Activated B cell treated with CpG ODN at 0.5 μM for 24 hours (primary cell): ENCODE measurements at regions of chr3 and their contacts with region 1.

Region 1: DNA sequence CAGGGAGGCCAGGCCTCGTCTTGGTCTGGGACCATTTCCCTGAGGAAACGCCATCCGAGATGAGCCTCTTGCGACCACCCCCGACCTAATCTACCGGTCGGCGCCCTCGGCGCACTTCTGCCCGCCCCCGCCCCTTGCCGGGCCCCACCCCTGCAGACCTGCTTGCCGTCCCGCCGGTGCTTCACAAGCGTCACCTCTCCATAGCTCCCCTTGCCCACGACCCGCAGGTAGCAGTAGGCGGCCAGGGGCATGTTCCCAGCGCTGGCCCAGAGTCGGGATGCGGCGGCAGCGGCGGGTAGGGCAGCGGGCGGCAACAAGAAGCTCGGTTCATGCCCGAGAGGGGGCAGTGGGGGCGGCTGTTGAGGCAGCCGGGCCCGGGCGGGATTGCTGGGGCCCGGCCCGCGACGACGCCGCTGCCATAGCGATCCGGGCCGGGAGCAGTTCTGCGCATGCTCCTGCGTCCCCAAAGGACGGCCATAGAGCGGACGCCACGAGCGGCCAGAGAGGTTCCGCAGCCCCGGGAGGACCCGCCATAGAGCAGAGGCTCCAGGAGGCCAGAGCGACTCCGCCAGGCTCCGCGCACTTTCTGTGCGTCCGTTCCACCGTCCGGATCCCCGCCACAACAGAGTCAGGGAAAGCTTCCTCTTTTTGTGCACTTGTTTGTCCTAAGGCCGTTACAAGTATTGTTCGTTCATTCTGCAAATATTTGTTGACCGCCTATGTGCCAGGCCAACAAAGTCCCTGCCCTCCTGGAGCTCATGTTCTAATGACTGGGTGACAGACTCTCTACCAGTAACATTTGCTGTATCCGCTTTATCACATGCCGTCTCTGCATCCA is at the start of gene NEK4:
- DNase-seq: peak; percentile 80
- ATAC-seq: peak; percentile 95
- H3K4me3 Mint-ChIP-seq: peak within 1 kb of the TSS; percentile 94
- H3K27ac Mint-ChIP-seq: peak within 1 kb of the TSS; percentile 95
- H3K4me1 Mint-ChIP-seq: peaks cover 17% of the 10 kb centered on the region
- H3K27me3 Mint-ChIP-seq: no peaks in the 10 kb centered on the region
- CTCF ChIP-seq: no peak
- total RNA-seq, gene NEK4: 23.0 and 24.5 TPM in 2 replicates

Region 2: GRCh38 chr3:52685709-52686691 is 84.7 kb before region 1 on chr3 and contains the starts of genes GNL3 and PBRM1:
- CTCF ChIA-PET with region 1: no interaction called
- POLR2A ChIA-PET with region 1: interaction called, 5 read pairs
- intact Hi-C with region 1: loop called (anchors 1 kb)
- DNase-seq: peak; percentile 92
- ATAC-seq: peak; percentile 89
- H3K4me3 Mint-ChIP-seq: peak within 1 kb of the TSS; percentile 96
- H3K27ac Mint-ChIP-seq: peak within 1 kb of the TSS; percentile 95
- H3K4me1 Mint-ChIP-seq: peaks cover 53% of the 10 kb centered on the region
- H3K27me3 Mint-ChIP-seq: no peaks in the 10 kb centered on the region
- CTCF ChIP-seq: no peak
- total RNA-seq, gene GNL3: 137 and 145 TPM in 2 replicates
- total RNA-seq, gene PBRM1: 60.0 and 62.1 TPM in 2 replicates

Region 3: DNA sequence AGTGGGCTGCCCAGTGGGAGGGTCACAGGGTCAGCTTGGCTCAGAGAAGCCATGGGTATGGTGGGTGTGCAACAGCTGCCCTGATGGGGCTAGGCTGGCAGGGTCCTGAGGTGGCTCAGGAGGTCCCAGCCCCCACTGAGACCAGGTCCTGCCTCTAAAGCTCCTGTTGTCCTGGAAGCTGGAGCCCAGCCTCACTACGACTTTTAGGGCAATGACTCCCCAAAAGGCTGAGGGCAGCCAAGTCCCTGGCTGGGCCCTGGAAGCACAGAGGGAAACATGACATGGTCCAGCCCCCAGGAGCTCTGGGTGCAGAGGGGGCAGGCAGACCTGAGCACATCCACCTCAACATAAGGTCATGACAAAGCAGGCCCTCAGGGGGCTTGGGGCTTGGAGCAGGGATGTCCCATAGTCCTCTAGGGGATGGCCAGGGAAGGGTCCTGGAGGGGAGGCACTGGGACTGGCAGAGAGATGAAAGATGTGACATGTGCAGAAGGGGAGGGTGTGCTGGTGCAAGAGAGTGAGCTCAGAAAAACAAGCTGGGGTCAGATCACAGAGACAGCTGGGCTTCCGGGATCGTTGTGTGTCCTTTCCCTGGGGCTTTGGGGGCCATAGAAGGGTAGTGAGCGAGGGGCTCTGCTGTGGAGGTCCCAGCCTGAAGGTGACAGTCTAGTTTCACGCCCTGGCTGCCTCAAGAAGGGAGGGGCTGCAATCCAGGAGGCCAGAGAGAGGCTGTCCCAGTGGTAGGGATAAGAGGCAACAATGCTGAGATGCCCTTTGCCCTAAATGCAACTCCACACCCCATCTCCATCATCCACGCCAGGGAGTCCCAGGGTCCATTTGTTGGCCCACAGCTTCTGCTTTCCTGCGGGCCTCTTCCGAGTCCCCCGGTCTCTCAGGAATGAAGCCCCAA is 23.2 kb after region 1 on chr3:
- CTCF ChIA-PET with region 1: interaction called, 4 read pairs
- POLR2A ChIA-PET with region 1: interaction called, 10 read pairs
- intact Hi-C with region 1: loop called (anchors 1 kb)
- DNase-seq: no peak
- ATAC-seq: no peak
- H3K4me3 Mint-ChIP-seq: no peak overlapping the region
- H3K27ac Mint-ChIP-seq: no peak overlapping the region
- H3K4me1 Mint-ChIP-seq: no peaks in the 10 kb centered on the region
- H3K27me3 Mint-ChIP-seq: no peaks in the 10 kb centered on the region
- CTCF ChIP-seq: no peak

Region 4: GRCh38 chr3:52820736-52821135 is 50.0 kb after region 1 on chr3:
- CTCF ChIA-PET with region 1: no interaction called
- POLR2A ChIA-PET with region 1: no interaction called
- intact Hi-C with region 1: loop called (anchors 5 kb)
- DNase-seq: no peak
- ATAC-seq: no peak
- H3K4me3 Mint-ChIP-seq: no peak overlapping the region
- H3K27ac Mint-ChIP-seq: no peak overlapping the region
- H3K4me1 Mint-ChIP-seq: no peaks in the 10 kb centered on the region
- H3K27me3 Mint-ChIP-seq: no peaks in the 10 kb centered on the region
- CTCF ChIP-seq: no peak

Region 5: DNA sequence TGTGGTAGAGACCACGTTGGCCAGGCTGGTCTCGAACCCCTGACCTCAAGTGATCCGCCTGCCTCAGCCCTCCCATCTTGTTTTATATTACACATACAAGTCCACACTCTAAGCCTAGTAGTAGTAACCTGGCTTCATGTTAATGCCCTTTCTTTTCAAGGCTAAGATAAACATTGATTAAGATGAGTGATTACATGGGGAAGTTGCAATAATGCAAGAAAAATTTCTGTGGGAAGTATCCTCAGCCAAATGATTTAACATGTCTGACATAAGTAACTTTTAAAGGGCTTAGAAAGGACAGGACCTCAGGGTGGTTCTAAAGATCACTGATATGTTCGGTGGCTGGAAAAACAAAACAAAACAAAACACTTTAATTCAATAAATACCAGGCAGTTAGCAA is 203.1 kb after region 1 on chr3:
- CTCF ChIA-PET with region 1: no interaction called
- POLR2A ChIA-PET with region 1: interaction called, 11 read pairs
- intact Hi-C with region 1: no loop called
- DNase-seq: no peak
- ATAC-seq: no peak
- H3K4me3 Mint-ChIP-seq: no peak overlapping the region
- H3K27ac Mint-ChIP-seq: no peak overlapping the region
- H3K4me1 Mint-ChIP-seq: peaks cover 18% of the 10 kb centered on the region
- H3K27me3 Mint-ChIP-seq: no peaks in the 10 kb centered on the region
- CTCF ChIP-seq: no peak